ENCODE measurements at regions of chr7 and their contacts with region 1.

Region 1: DNA sequence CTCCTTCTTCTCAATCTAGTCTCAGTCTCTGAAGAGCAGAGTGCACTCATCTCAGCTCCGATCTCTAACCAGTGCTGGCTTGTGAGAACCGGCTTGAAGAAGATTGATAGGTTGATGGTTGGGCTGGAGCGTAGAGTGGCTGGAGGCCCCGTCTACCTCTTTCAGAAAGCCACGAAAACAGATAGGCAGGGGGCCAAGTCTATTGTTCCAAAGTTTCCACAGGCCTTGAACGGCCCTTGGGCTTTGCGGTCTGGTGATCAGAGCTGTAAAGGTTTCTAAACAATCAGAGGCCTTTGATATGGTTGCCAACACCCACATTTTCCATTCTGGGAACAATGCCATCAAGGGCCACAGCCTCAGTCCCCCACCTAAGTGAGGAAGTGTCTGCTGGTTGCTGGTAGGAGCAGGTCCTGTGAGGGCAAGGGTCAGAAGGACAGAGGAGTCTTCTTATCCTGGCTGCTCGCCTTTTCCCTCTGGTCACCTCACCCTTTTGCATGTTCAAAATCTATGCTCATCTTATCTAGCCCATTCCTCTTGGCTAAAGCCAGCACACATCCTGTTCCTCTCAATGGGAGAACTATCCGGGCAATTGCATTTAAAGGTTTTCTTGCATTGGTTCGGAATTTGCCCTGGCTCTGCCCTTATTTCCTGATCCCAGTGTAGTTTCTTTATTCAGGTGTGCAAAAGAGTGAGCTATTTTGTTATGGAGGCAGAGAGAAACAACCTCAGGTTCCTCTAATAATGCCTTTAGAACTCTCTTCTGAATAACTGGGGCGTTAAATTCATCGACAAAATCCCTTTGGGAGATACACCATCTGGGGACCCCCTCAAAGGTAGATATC is 70.3 kb upstream of the KMT2E start:
- DNase-seq: peak in 1 of 2 donors; percentile 75
- H3K4me3 ChIP-seq: no peak overlapping the region
- H3K27ac ChIP-seq: peak overlapping the region; percentile 91 to 95
- H3K4me1 ChIP-seq: peaks cover 7 to 28% of the 10 kb centered on the region in 2 donors
- H3K27me3 ChIP-seq: no peaks in the 10 kb centered on the region
- CTCF ChIP-seq: no peak

Region 2: GRCh38 chr7:105012503-105013220 is 68.9 kb after region 1 on chr7:
- intact Hi-C with region 1: loop called (anchors 1 kb)
- DNase-seq: peak; percentile 98 to 100
- H3K4me3 ChIP-seq: peak overlapping the region; percentile 83 to 98
- H3K27ac ChIP-seq: peak overlapping the region; percentile 97 to 100
- H3K4me1 ChIP-seq: peaks cover 0 to 12% of the 10 kb centered on the region in 2 donors
- H3K27me3 ChIP-seq: no peaks in the 10 kb centered on the region
- CTCF ChIP-seq: no peak

Region 3: GRCh38 chr7:105055621-105056020 is 111.9 kb after region 1 on chr7:
- intact Hi-C with region 1: no loop called
- DNase-seq: no peak
- H3K4me3 ChIP-seq: no peak overlapping the region
- H3K27ac ChIP-seq: no peak overlapping the region
- H3K4me1 ChIP-seq: peaks cover 0 to 19% of the 10 kb centered on the region in 2 donors
- H3K27me3 ChIP-seq: no peaks in the 10 kb centered on the region
- CTCF ChIP-seq: no peak

Region 4: GRCh38 chr7:105996860-105997737 is 1053.4 kb after region 1 on chr7:
- intact Hi-C with region 1: no loop called
- DNase-seq: no peak
- H3K4me3 ChIP-seq: no peak overlapping the region
- H3K27ac ChIP-seq: no peak overlapping the region
- H3K4me1 ChIP-seq: no peaks in the 10 kb centered on the region
- H3K27me3 ChIP-seq: no peaks in the 10 kb centered on the region
- CTCF ChIP-seq: no peak

Measured in ascending aorta (tissue), 2 donors.